CD4-positive, alpha-beta T cell (primary cell): ENCODE measurements at regions of chr1 and their contacts with region 1.

Region 1: GRCh38 chr1:25543425-25544242 is at the start of gene LDLRAP1:
- DNase-seq: peak in 12 of 14 experiments; percentile 28 to 81 (median 56)
- ATAC-seq: peak; percentile 71
- H3K4me3 ChIP-seq: peak within 1 kb of the TSS; percentile 90
- H3K4me3 Mint-ChIP-seq: peak within 1 kb of the TSS; percentile 96
- H3K27ac ChIP-seq: peak within 1 kb of the TSS; percentile 55 to 60
- H3K27ac Mint-ChIP-seq: peak within 1 kb of the TSS; percentile 87
- H3K4me1 ChIP-seq: peaks cover 50% of the 10 kb centered on the region
- H3K4me1 Mint-ChIP-seq: peaks cover 47% of the 10 kb centered on the region
- H3K27me3 ChIP-seq: no peaks in the 10 kb centered on the region
- H3K27me3 Mint-ChIP-seq: no peaks in the 10 kb centered on the region
- CTCF ChIP-seq: no peak
- total RNA-seq, gene LDLRAP1: 70.5 to 73.5 TPM

Region 2: DNA sequence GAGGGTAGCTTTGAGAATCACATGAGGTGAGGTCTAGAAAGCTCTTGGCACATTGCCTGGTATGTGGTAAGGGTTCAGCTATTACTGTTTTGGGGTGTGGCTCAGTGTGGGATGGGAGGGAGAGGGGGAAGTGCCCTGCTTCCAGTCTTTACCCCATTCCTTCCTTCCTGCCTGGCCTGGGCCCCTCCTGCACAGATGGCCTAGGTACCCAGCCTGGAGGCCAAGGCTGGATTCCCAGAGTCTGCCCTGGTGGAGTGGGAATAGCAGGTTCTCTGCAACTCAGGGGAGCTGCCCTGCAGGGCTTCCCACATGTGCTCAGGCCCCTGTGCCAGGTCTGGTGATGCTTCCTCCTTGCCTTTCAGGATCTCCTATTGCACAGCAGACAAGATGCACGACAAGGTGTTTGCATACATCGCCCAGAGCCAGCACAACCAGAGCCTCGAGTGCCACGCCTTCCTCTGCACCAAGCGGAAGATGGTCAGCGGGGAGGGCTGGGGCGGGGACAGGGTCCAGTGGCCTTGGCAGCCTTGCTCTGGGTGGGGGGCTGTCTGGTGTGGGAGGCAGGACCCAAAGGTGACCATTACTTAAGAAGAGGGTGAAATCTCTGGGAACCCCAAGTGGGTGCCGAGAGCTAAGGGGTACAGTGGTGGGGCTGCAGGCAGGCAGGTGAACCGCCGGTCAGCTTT is 13.3 kb after region 1 on chr1:
- CTCF ChIA-PET with region 1: interaction called, 4 read pairs
- POLR2A ChIA-PET with region 1: interaction called, 193 read pairs
- intact Hi-C with region 1: loop called in 1 of 2 experiments (anchors 1 kb)
- DNase-seq: peak in 7 of 14 experiments; percentile 27 to 78 (median 71)
- ATAC-seq: peak; percentile 66
- H3K4me3 ChIP-seq: peak overlapping the region; percentile 5
- H3K4me3 Mint-ChIP-seq: peak overlapping the region; percentile 64
- H3K27ac ChIP-seq: peak overlapping the region; percentile 59 to 83
- H3K27ac Mint-ChIP-seq: peak overlapping the region; percentile 87
- H3K4me1 ChIP-seq: peaks cover 100% of the 10 kb centered on the region
- H3K4me1 Mint-ChIP-seq: peaks cover 100% of the 10 kb centered on the region
- H3K27me3 ChIP-seq: no peaks in the 10 kb centered on the region
- H3K27me3 Mint-ChIP-seq: no peaks in the 10 kb centered on the region
- CTCF ChIP-seq: no peak

Region 3: GRCh38 chr1:25566730-25567341 is 23.2 kb after region 1 on chr1:
- CTCF ChIA-PET with region 1: interaction called, 7 read pairs
- POLR2A ChIA-PET with region 1: interaction called, 193 read pairs
- intact Hi-C with region 1: loop called in 1 of 2 experiments (anchors 1 kb)
- DNase-seq: peak in 9 of 14 experiments; percentile 30 to 74 (median 65)
- ATAC-seq: no peak
- H3K4me3 ChIP-seq: peak overlapping the region; percentile 85
- H3K4me3 Mint-ChIP-seq: peak overlapping the region; percentile 99
- H3K27ac ChIP-seq: peak overlapping the region in 1 of 2 donors; percentile 15
- H3K27ac Mint-ChIP-seq: peak overlapping the region; percentile 87
- H3K4me1 ChIP-seq: peaks cover 94% of the 10 kb centered on the region
- H3K4me1 Mint-ChIP-seq: peaks cover 74% of the 10 kb centered on the region
- H3K27me3 ChIP-seq: no peaks in the 10 kb centered on the region
- H3K27me3 Mint-ChIP-seq: no peaks in the 10 kb centered on the region
- CTCF ChIP-seq: peak; percentile 42

Region 4: DNA sequence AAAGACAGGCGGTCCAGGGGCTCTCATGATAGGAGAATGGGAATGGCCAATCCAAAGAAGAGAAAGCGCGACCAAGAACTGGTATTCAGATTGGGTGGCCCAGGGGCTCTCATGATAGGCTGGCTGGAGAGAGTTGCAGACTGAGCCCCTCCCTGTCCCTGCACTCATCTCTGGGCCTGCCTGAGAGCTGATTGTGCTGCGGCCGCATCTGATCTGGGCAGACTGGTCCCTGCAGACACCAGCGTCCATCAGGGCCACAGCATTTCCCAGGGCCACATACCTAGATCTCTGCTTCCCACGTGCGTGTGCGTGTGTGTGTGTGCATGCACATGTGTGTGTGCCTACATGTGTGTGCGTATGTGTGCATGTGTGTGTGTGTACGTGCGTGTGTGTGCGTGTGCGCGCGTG is 42.6 kb after region 1 on chr1:
- CTCF ChIA-PET with region 1: no interaction called
- POLR2A ChIA-PET with region 1: no interaction called
- intact Hi-C with region 1: no loop called
- DNase-seq: no peak
- ATAC-seq: no peak
- H3K4me3 ChIP-seq: no peak overlapping the region
- H3K4me3 Mint-ChIP-seq: no peak overlapping the region
- H3K27ac ChIP-seq: no peak overlapping the region
- H3K27ac Mint-ChIP-seq: no peak overlapping the region
- H3K4me1 ChIP-seq: peaks cover 20% of the 10 kb centered on the region
- H3K4me1 Mint-ChIP-seq: peaks cover 16% of the 10 kb centered on the region
- H3K27me3 ChIP-seq: no peaks in the 10 kb centered on the region
- H3K27me3 Mint-ChIP-seq: no peaks in the 10 kb centered on the region
- CTCF ChIP-seq: no peak